ENCODE measurements at regions of chr15 and their contacts with region 1.

Region 1: GRCh38 chr15:50182219-50183013 is 420 bp downstream of the SLC27A2 start:
- DNase-seq: peak; percentile 87
- H3K4me3 Mint-ChIP-seq: peak overlapping the region; percentile 98
- H3K27ac Mint-ChIP-seq: peak overlapping the region; percentile 87
- H3K4me1 Mint-ChIP-seq: peaks cover 51% of the 10 kb centered on the region
- H3K27me3 Mint-ChIP-seq: no peaks in the 10 kb centered on the region

Region 2: DNA sequence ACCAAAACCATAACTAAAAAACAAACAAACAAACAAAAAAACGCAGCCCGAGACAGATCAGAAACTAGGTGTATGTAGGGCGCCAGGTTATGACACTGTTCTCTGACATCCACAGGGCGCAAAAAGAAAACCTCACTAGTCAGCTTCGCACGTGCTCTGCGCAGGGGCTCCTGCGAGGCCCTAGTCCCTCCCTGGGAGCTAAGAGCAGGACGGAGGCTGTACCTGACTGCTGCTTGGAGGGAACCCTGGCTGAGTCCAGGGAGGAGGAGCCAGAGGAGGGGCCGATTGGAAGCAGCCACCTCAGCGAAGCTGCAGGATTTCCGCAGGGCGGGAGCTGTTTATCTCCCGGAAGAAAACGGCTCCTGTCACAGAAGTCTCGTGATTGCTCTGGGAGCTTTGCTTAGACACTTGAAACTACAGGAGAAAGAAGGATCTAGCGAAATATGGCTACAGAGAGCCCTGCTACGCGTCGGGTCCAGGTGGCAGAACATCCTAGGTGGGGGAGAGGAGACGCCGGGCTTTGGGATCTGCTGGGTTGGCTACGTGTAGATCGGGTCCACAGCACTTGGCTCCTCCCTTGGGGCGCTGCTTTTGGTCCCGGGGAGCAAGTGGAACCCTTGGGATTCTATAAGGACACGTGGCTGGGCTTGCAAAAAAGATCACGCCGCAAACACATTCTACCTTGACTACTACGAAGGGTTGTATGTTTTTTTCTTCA is 1012.4 kb before region 1 on chr15 and contains the start of gene GALK2:
- intact Hi-C with region 1: loop called (anchors 5 kb)
- DNase-seq: peak; percentile 95
- H3K4me3 Mint-ChIP-seq: peak within 1 kb of the TSS; percentile 100
- H3K27ac Mint-ChIP-seq: peak within 1 kb of the TSS; percentile 99
- H3K4me1 Mint-ChIP-seq: peaks cover 26% of the 10 kb centered on the region
- H3K27me3 Mint-ChIP-seq: no peaks in the 10 kb centered on the region
- total RNA-seq, gene GALK2: 24.7 and 25.5 TPM in 2 replicates

Region 3: DNA sequence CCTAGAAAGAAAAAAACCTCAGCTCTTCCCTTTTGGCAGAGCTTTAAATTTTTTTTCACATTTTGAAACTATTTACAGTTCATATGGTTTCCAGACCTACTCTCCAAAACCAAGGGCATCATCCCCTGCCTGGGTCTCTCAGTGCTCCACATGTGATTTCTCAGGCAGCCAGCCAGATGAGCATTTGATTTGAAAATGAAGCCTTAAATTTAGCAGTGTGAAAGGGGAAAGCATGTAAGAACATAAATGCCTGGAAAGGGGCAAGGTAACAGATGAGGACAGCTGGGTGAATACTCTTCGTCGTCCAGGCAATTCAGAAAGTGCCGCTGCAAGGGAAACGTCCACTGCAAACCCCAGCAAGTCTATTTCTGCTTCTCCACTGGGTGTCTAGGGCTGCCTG is 158.1 kb before region 1 on chr15:
- intact Hi-C with region 1: no loop called
- DNase-seq: no peak
- H3K4me3 Mint-ChIP-seq: no peak overlapping the region
- H3K27ac Mint-ChIP-seq: no peak overlapping the region
- H3K4me1 Mint-ChIP-seq: peaks cover 2% of the 10 kb centered on the region
- H3K27me3 Mint-ChIP-seq: no peaks in the 10 kb centered on the region

Region 4: GRCh38 chr15:50059883-50060282 is 122.5 kb before region 1 on chr15:
- intact Hi-C with region 1: loop called (anchors 5 kb)
- DNase-seq: peak; percentile 65
- H3K4me3 Mint-ChIP-seq: peak overlapping the region; percentile 60
- H3K27ac Mint-ChIP-seq: peak overlapping the region; percentile 72
- H3K4me1 Mint-ChIP-seq: peaks cover 51% of the 10 kb centered on the region
- H3K27me3 Mint-ChIP-seq: no peaks in the 10 kb centered on the region

Region 5: GRCh38 chr15:50247819-50248655 is 65.6 kb after region 1 on chr15:
- intact Hi-C with region 1: loop called (anchors 5 kb)
- DNase-seq: peak; percentile 91
- H3K4me3 Mint-ChIP-seq: peak overlapping the region; percentile 81
- H3K27ac Mint-ChIP-seq: peak overlapping the region; percentile 99
- H3K4me1 Mint-ChIP-seq: peaks cover 53% of the 10 kb centered on the region
- H3K27me3 Mint-ChIP-seq: no peaks in the 10 kb centered on the region